Endothelial cell of umbilical vein (primary cell): ENCODE measurements at regions of chr3 and their contacts with region 1.

Region 1: GRCh38 chr3:156174229-156174847 is 54.0 kb downstream of the KCNAB1 start:
- DNase-seq: peak; percentile 74
- H3K4me3 ChIP-seq: no peak overlapping the region
- H3K27ac ChIP-seq: no peak overlapping the region
- H3K4me1 ChIP-seq: no peaks in the 10 kb centered on the region
- H3K27me3 ChIP-seq: no peaks in the 10 kb centered on the region
- CTCF ChIP-seq: peak; percentile 32 to 45
- POLR2A ChIP-seq: no peak

Region 2: GRCh38 chr3:155946178-155946577 is 228.2 kb before region 1 on chr3:
- CTCF ChIA-PET with region 1: no interaction called
- POLR2A ChIA-PET with region 1: no interaction called
- dilution Hi-C with region 1: no loop called
- intact Hi-C with region 1: no loop called
- DNase-seq: no peak
- H3K4me3 ChIP-seq: no peak overlapping the region
- H3K27ac ChIP-seq: no peak overlapping the region
- H3K4me1 ChIP-seq: peaks cover 2% of the 10 kb centered on the region
- H3K27me3 ChIP-seq: no peaks in the 10 kb centered on the region
- CTCF ChIP-seq: no peak
- POLR2A ChIP-seq: no peak

Region 3: DNA sequence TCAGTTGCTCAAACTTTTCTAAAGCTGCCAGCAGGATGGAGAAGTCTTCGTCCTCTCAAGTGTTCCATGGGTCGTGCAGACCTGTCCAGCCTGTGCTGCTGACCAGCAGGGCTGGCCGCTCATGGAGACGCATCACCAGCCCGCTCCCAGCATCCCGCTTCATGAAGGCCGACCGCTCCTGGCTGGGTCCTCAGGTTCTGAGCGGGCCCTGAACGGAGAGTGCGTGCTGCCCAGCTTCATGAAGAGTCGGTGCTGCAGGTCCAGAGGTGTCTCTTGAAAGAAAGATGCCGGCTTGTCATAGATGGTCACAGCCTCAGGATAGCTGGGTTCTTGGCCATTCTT is 129.7 kb before region 1 on chr3:
- CTCF ChIA-PET with region 1: interaction called, 13 read pairs
- POLR2A ChIA-PET with region 1: no interaction called
- dilution Hi-C with region 1: no loop called
- intact Hi-C with region 1: no loop called
- DNase-seq: no peak
- H3K4me3 ChIP-seq: no peak overlapping the region
- H3K27ac ChIP-seq: no peak overlapping the region
- H3K4me1 ChIP-seq: no peaks in the 10 kb centered on the region
- H3K27me3 ChIP-seq: no peaks in the 10 kb centered on the region
- CTCF ChIP-seq: no peak
- POLR2A ChIP-seq: no peak

Region 4: DNA sequence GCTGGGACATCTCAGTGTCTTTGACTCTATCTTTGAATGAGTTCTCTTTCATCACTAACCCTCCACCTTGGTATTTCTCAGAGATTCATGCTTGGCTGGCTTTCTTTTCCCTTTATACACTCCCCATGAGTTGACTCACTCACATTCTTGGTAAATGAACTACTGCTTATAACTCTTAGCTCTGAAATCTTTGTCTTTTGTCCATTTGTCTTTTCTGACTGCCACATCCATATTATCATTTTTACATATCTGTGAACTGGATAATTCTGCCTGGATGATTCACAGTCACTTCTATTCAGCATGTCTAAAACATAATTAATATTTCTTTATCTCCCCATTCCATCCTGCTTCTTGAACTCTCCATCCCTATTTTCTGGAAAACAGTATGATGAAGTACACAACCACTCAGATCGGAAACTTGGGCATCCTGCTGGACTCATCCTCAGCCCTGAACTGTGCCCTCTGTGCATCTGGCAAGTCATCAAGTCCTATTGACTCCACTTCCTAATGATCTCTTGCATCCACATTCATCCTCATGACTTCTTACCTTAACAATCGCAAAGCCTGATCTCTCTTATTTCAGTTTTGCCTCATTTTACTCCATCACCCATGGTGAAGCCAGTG is 12.9 kb after region 1 on chr3:
- CTCF ChIA-PET with region 1: interaction called, 14 read pairs
- POLR2A ChIA-PET with region 1: no interaction called
- dilution Hi-C with region 1: no loop called
- intact Hi-C with region 1: no loop called
- DNase-seq: no peak
- H3K4me3 ChIP-seq: no peak overlapping the region
- H3K27ac ChIP-seq: no peak overlapping the region
- H3K4me1 ChIP-seq: no peaks in the 10 kb centered on the region
- H3K27me3 ChIP-seq: no peaks in the 10 kb centered on the region
- CTCF ChIP-seq: no peak
- POLR2A ChIP-seq: no peak

Region 5: GRCh38 chr3:156291272-156292123 is 117.2 kb after region 1 on chr3:
- CTCF ChIA-PET with region 1: interaction called, 11 read pairs
- POLR2A ChIA-PET with region 1: no interaction called
- dilution Hi-C with region 1: no loop called
- intact Hi-C with region 1: no loop called
- DNase-seq: no peak
- H3K4me3 ChIP-seq: peak overlapping the region; percentile 12 to 21 (median 14)
- H3K27ac ChIP-seq: no peak overlapping the region
- H3K4me1 ChIP-seq: peaks cover 6% of the 10 kb centered on the region
- H3K27me3 ChIP-seq: peaks cover 8 to 16% of the 10 kb centered on the region in 2 experiments
- CTCF ChIP-seq: no peak
- POLR2A ChIP-seq: no peak

Region 6: DNA sequence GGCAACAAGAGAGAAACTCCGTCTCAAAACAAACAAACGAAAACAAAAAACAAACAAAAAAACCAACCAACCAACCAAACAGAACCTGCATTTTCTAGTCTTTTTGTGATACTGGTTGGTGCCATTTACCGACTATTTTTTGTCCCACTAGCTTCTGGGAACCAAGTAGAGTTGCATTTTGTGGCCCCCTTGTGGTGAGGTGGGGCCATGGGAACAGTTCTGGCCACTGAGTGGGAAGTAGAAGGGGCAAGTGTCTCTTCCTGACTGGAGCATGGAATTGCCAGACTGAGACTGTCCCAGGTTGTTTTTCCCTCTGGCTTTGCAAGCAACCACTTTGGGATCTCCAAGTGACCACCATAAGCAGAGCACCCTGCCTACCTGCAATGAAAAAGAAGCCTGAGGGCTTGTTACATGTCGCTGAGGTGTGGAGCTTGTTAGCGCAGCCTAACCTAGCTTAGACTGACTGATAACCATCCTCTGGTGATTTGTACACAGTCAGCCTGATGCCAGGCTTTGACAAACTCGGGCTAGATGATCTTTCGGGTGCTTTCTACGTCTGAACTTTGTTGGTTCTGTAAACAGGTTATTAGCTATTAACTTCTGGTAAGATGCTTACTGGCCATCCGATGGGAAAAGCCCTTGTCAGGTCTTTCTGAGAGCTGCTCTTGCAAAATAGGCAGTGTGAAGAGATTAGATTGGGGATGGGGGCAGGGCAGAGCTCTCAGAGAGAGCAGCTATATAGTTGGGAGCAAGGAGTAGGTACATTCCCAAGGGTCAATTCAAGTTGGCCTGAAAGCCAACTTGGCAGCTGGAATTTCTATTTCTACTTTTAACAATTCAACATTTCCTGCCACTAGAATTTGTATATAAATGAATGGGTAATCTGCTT is 208.4 kb after region 1 on chr3:
- CTCF ChIA-PET with region 1: interaction called, 424 read pairs
- POLR2A ChIA-PET with region 1: interaction called, 4 read pairs
- dilution Hi-C with region 1: no loop called
- intact Hi-C with region 1: loop called (anchors 1 kb)
- DNase-seq: peak; percentile 49
- H3K4me3 ChIP-seq: no peak overlapping the region
- H3K27ac ChIP-seq: no peak overlapping the region
- H3K4me1 ChIP-seq: no peaks in the 10 kb centered on the region
- H3K27me3 ChIP-seq: no peaks in the 10 kb centered on the region
- CTCF ChIP-seq: peak; percentile 76 to 84
- POLR2A ChIP-seq: no peak

Region 7: DNA sequence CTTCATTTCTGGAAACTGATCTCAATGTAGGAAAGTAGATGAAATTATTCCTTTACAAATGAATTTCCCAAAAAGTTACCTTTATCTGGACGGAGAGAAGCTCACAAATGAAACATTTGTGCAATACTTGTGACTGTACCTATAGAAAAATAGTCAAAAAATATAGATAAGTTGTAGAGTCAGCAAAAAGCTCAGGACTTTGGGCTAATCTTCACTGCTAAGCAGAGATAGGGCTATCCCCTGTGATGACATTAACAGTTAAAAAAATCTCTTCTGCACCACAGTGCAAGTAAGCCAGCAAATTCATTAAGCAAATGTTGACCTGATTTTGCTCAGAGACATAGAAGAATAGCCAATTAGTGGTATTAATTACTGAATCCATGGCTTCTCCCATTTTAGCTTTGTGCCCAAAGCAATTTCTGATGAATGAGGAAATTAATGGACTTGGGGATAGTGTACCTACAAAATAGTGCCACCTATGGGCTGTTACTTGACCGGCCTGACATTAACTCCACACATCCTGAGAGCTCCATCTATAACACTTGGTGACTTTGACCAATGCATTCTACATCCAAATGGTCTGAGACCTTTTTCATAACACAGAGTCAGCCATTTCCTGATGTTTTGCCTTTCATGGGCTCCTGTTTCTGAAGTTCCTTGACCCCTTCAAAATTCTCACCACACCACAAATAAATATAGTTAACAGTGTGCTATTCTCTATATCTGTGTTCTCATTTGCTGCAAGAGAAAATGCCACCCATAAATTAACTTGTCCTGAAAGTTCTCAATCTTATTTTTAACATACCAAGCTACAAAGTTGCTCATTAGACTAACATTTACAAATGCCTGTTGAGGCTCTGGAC is 275.6 kb after region 1 on chr3:
- CTCF ChIA-PET with region 1: interaction called, 119 read pairs
- POLR2A ChIA-PET with region 1: no interaction called
- dilution Hi-C with region 1: no loop called
- intact Hi-C with region 1: loop called (anchors 2 kb)
- DNase-seq: peak; percentile 67
- H3K4me3 ChIP-seq: no peak overlapping the region
- H3K27ac ChIP-seq: no peak overlapping the region
- H3K4me1 ChIP-seq: peaks cover 5% of the 10 kb centered on the region
- H3K27me3 ChIP-seq: no peaks in the 10 kb centered on the region
- CTCF ChIP-seq: peak; percentile 58 to 59
- POLR2A ChIP-seq: no peak

Region 8: GRCh38 chr3:156542101-156542714 is 367.9 kb after region 1 on chr3:
- CTCF ChIA-PET with region 1: interaction called, 22 read pairs
- POLR2A ChIA-PET with region 1: no interaction called
- dilution Hi-C with region 1: no loop called
- intact Hi-C with region 1: no loop called
- DNase-seq: no peak
- H3K4me3 ChIP-seq: no peak overlapping the region
- H3K27ac ChIP-seq: peak overlapping the region; percentile 93
- H3K4me1 ChIP-seq: peaks cover 55% of the 10 kb centered on the region
- H3K27me3 ChIP-seq: no peaks in the 10 kb centered on the region
- CTCF ChIP-seq: no peak
- POLR2A ChIP-seq: no peak